RWPE1 (cell line): ENCODE measurements at regions of chr17 and their contacts with region 1.

Region 1: GRCh38 chr17:76278952-76279741 is 14.0 kb downstream of the UBALD2 start:
- DNase-seq: peak; percentile 82
- H3K27ac ChIP-seq: peak overlapping the region; percentile 31
- CTCF ChIP-seq: peak; percentile 97

Region 2: GRCh38 chr17:76121932-76122430 is 157.2 kb before region 1 on chr17:
- CTCF ChIA-PET with region 1: interaction called, 60 read pairs
- POLR2A ChIA-PET with region 1: no interaction called
- DNase-seq: no peak
- H3K27ac ChIP-seq: no peak overlapping the region
- CTCF ChIP-seq: no peak

Region 3: DNA sequence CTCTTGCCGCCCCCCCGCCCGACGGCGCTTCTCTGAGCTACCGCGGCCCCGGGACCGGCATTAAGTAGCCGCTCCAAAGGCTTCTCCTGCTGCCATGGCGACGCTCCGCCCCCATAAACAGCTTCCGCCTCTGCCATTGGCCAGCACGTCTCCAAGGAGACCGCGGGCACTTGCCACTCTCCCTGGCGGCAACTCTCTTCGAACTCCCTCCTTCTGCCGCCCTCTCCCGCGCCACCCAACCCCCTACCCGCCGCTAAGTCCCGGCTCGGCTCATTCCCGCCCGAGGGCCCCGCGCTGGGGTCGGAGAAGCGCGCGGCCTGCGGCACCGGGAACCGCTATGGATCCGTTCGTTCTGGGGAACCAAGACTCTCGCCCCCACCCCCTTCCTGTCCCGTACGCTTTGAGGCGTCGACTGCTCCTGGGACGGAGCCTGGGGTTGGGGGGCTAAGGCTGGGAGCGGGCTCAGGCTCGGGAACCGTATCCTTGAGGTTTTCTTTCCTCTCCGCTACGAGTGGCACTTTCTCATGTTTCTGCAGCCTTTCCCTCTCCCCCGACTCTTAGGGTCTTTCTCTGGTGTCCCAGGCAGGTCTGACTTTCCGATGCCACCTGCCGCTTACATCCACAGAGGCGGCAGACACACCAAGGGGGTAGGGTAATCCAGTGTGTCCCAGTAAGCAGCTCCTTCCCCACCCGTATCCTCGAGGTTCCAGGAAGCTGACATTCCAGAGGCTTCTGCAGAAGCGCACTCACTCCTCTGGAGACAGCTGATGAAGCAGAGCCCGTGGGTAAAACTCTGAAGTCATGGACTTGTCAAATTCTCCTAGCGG is 137.7 kb before region 1 on chr17 and contains the start of gene FOXJ1:
- CTCF ChIA-PET with region 1: interaction called, 12 read pairs
- POLR2A ChIA-PET with region 1: no interaction called
- DNase-seq: peak; percentile 98
- H3K27ac ChIP-seq: no peak within 1 kb of the TSS
- CTCF ChIP-seq: no peak

Region 4: GRCh38 chr17:76182016-76182764 is 97.0 kb before region 1 on chr17:
- CTCF ChIA-PET with region 1: interaction called, 31 read pairs
- POLR2A ChIA-PET with region 1: no interaction called
- DNase-seq: peak; percentile 86
- H3K27ac ChIP-seq: no peak overlapping the region
- CTCF ChIP-seq: peak; percentile 93

Region 5: GRCh38 chr17:76246080-76247066 is 32.8 kb before region 1 on chr17:
- CTCF ChIA-PET with region 1: interaction called, 17 read pairs
- POLR2A ChIA-PET with region 1: no interaction called
- DNase-seq: no peak
- H3K27ac ChIP-seq: no peak overlapping the region
- CTCF ChIP-seq: no peak

Region 6: DNA sequence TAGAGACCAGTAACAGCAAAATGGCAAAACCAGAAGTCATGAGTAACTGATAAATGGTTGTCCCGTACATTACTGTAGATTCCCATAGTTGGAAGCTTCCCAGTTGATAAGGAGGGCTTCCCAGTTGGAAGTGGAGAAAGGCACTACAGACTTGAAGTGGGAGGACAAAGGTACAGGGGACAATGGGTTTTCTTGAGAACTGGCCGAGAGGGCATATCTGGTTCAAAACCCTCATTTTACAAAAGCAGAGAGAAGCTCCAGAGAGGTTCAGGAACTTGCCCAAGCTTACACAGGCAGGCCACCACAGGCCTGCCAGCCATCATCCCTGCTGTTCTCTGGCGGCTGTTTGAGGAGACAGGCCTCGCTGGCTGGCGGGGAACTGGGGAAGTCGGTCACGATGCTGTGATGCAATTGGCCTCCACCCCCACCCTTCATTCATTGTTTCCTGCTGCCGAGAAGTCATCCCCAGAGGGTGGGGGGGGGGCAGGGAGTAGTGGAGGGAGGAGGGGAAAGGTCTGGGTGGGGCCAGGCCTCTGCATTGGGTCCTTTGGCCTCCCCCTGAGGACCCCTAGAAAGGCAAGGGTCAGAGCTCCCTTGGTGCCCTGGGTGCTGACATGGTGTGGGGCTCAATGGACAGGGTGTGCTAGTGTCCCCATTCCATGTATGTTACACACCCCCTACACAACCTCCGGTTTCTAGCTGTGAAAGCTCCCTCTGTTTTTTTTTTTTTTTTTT is 11.0 kb before region 1 on chr17:
- CTCF ChIA-PET with region 1: interaction called, 12 read pairs
- POLR2A ChIA-PET with region 1: interaction called, 3 read pairs
- DNase-seq: peak; percentile 84
- H3K27ac ChIP-seq: peak overlapping the region; percentile 93
- CTCF ChIP-seq: no peak